Breast epithelium (tissue), 4 donors: ENCODE measurements at regions of chr20 and their contacts with region 1.

Region 1: GRCh38 chr20:16407251-16408067 is 165.8 kb downstream of the KIF16B start:
- DNase-seq: no peak
- H3K4me3 ChIP-seq: no peak overlapping the region
- H3K27ac ChIP-seq: no peak overlapping the region
- H3K4me1 ChIP-seq: no peaks in the 10 kb centered on the region
- H3K27me3 ChIP-seq: no peaks in the 10 kb centered on the region
- CTCF ChIP-seq: no peak
- POLR2A ChIP-seq: no peak

Region 2: DNA sequence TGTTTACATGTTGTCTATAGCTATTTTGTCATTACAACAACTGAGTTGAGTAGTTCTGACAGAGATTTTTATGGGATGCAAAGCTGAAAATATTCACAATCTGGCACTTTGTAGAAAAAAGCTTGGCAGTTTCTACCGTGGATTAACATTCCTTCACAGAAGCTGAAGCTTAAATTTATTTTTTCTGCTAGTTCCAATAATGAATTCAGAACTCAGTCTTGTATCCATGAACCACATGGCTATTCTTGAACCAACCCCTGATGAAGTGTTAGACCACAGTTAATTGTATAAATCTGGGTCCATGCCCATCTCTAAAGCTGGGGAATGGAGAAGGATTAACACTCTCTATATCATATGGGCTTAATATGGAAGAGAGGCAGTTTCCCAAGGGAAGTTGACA is 1326.2 kb before region 1 on chr20:
- intact Hi-C with region 1: no loop called
- DNase-seq: no peak
- H3K4me3 ChIP-seq: no peak overlapping the region
- H3K27ac ChIP-seq: no peak overlapping the region
- H3K4me1 ChIP-seq: no peaks in the 10 kb centered on the region
- H3K27me3 ChIP-seq: no peaks in the 10 kb centered on the region
- CTCF ChIP-seq: no peak
- POLR2A ChIP-seq: no peak

Region 3: DNA sequence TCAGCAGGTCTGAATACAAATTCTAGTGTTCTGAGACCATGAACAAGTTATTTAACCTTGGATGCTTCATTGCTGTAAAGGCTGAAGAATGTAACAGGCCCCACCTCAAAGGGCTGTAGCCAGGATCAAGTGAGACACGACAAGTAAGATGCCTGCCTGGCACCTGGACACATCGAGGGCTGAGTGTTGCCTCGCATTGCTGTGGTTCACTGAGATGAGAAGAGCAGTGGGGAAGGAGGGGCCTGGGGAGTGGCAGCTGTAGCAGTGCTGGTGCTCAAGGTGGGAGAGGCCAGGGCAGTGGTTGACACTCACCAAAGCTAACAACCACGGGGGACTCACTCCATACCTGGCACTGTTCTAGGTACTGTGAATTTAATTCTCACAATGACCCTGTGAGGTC is 22.0 kb before region 1 on chr20:
- intact Hi-C with region 1: loop called (anchors 1 kb)
- DNase-seq: no peak
- H3K4me3 ChIP-seq: no peak overlapping the region
- H3K27ac ChIP-seq: no peak overlapping the region
- H3K4me1 ChIP-seq: no peaks in the 10 kb centered on the region
- H3K27me3 ChIP-seq: no peaks in the 10 kb centered on the region
- CTCF ChIP-seq: no peak
- POLR2A ChIP-seq: no peak

Region 4: GRCh38 chr20:17542993-17543412 is 1135.5 kb after region 1 on chr20:
- intact Hi-C with region 1: no loop called
- DNase-seq: no peak
- H3K4me3 ChIP-seq: no peak overlapping the region
- H3K27ac ChIP-seq: peak overlapping the region; percentile 75
- H3K4me1 ChIP-seq: peaks cover 0 to 6% of the 10 kb centered on the region in 2 donors
- H3K27me3 ChIP-seq: no peaks in the 10 kb centered on the region
- CTCF ChIP-seq: no peak
- POLR2A ChIP-seq: no peak